ENCODE measurements at regions of chr5 and their contacts with region 1.

Region 1: DNA sequence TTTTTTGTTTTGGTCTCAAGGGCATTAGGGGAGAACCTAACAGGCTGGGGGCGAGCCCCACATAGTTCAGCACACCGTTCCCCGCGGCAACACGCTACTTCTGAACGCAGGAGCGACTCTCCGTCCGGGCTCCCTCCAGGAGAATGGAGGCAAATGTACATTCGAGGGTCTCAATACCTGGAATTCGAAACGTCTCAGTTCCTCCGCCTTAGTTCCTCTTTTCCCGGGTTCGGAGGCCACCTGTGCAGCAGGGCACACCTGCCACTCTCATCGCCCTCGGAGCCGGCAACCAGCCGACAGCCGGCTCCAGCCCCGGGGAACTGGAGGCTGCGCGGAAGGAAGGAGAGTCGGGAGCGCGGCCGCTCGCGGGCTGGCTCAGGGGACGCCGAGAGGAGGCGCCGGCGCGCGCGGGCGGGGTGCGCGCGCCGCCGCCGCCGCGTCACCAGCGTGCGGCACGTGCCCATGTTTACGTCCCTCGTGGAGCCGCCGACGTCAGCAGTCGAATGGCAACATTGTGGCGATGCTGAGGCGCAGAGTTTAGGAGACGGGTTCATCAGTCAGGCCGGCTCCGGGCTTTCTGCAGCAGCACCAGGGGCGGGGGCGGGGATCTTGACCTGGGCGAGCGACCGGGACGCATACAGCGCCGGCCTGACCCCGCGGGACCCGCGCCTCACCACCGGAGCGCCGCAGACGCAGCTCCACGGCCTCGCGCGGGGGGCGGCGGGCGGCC is at the start of gene JMY:
- DNase-seq: peak; percentile 73 to 89 (median 84)
- ATAC-seq: peak; percentile 89
- H3K4me3 ChIP-seq: peak within 1 kb of the TSS; percentile 95
- H3K4me3 Mint-ChIP-seq: peak within 1 kb of the TSS; percentile 86 to 97 (median 94)
- H3K27ac ChIP-seq: peak within 1 kb of the TSS; percentile 99
- H3K27ac Mint-ChIP-seq: peak within 1 kb of the TSS; percentile 83 to 98 (median 93)
- H3K4me1 ChIP-seq: peaks cover 6 to 35% of the 10 kb centered on the region in 2 donors
- H3K4me1 Mint-ChIP-seq: peaks cover 15 to 35% (median 29%) of the 10 kb centered on the region in 7 donors
- H3K27me3 ChIP-seq: no peaks in the 10 kb centered on the region
- H3K27me3 Mint-ChIP-seq: peaks cover 0 to 4% (median 0%) of the 10 kb centered on the region in 5 donors
- total RNA-seq, gene JMY: 6.5 to 47.0 (median 24.2) TPM

Region 2: DNA sequence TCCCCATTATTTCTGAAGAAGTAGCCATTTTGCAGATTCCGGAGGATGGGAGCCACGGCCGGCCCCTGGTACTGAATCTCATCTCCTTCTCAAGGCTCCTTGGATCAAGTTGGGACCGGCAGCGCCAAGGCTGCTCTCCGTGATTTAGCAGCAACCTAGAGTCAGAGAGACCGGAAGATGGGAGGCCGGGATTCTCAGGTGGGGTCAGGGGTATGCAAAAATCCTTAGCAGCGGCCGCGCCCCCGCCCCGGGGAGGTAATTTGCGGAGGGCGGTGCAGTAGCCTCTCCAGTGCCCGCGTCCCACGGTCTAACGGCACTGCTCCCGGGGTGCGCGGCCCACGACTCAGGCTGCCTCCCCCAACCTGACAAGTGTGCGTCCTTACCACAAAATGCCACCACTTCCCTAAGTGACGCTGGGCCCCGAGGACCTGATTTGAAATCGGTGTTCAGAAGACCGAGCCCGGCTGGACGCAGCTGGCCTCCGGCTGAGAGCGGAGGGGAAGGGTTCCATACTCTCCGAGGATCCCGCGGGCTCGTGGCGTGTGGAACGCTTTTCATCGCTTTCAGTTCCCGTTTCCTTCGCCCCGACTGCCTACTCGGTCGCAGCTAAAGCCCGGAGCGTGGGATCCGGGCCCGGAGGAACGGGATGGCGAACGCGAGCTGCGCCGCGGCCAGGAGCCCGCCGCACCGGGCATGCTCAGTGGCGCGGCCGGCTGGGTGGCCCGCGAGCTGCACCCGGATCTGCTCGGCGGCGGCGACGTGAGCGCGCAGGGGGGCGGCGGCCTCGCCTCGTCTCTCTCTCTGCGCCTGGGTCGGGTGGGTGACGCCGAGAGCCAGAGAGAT is 875.7 kb before region 1 on chr5 and contains the start of gene SCAMP1:
- CTCF ChIA-PET with region 1: no interaction called
- POLR2A ChIA-PET with region 1: interaction called, 4 read pairs
- intact Hi-C with region 1: loop called in 1 of 2 experiments (anchors 2 kb)
- DNase-seq: peak; percentile 84 to 96 (median 93)
- ATAC-seq: peak; percentile 92
- H3K4me3 ChIP-seq: peak within 1 kb of the TSS; percentile 99
- H3K4me3 Mint-ChIP-seq: peak within 1 kb of the TSS; percentile 89 to 97 (median 94)
- H3K27ac ChIP-seq: peak within 1 kb of the TSS; percentile 85
- H3K27ac Mint-ChIP-seq: peak within 1 kb of the TSS; percentile 71 to 97 (median 96)
- H3K4me1 ChIP-seq: peaks cover 11 to 16% of the 10 kb centered on the region in 2 donors
- H3K4me1 Mint-ChIP-seq: peaks cover 27 to 64% (median 55%) of the 10 kb centered on the region in 7 donors
- H3K27me3 ChIP-seq: no peaks in the 10 kb centered on the region
- H3K27me3 Mint-ChIP-seq: no peaks in the 10 kb centered on the region
- total RNA-seq, gene SCAMP1: 16.9 to 27.6 (median 23.0) TPM

Region 3: GRCh38 chr5:79255786-79256557 is 20.2 kb after region 1 on chr5:
- CTCF ChIA-PET with region 1: interaction called, 5 read pairs
- POLR2A ChIA-PET with region 1: interaction called, 3 read pairs
- intact Hi-C with region 1: loop called in 1 of 2 experiments (anchors 2 kb)
- DNase-seq: no peak
- ATAC-seq: peak; percentile 10
- H3K4me3 ChIP-seq: no peak overlapping the region
- H3K4me3 Mint-ChIP-seq: no peak overlapping the region
- H3K27ac ChIP-seq: no peak overlapping the region
- H3K27ac Mint-ChIP-seq: peak overlapping the region in 1 of 9 donors; percentile 46
- H3K4me1 ChIP-seq: peaks cover 3 to 6% of the 10 kb centered on the region in 2 donors
- H3K4me1 Mint-ChIP-seq: peaks cover 7 to 88% (median 58%) of the 10 kb centered on the region in 7 donors
- H3K27me3 ChIP-seq: no peaks in the 10 kb centered on the region
- H3K27me3 Mint-ChIP-seq: no peaks in the 10 kb centered on the region

Region 4: DNA sequence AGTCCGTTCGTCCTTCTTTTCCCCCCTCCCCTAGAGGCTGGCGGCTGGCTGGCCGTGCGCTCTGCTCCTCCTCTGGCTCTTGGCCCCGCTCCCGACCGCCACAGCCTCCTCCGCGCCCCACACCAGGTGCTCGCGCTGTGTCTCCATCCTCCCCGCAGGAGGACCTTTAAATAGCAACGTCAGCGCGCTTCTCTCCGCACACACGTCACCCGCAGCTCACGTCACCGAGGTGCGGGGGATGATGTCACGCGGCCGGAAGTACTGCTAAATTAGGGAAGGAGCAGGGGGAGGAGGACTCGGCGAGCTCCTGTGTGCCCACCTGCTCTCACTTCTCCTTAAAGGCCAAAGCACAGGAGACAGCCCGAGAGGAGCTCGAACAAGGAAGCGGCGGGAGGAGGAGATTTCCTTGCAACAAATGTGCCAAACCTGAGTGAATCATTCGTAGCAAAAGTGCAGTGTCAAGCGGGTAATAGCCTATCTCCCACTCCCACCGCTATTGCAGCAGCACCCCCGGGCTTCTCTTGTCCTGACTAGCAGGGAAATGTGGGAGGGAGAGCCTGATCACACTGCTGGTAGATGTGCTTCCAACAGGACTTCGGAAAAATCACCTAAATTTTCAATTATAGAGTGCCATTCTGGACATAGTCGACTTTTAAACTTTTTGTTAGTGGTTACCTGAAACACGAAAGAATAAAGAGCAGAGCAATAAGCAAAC is 278.7 kb after region 1 on chr5:
- CTCF ChIA-PET with region 1: no interaction called
- POLR2A ChIA-PET with region 1: interaction called, 5 read pairs
- intact Hi-C with region 1: loop called (anchors 1 kb)
- DNase-seq: peak; percentile 80 to 94 (median 91)
- ATAC-seq: peak; percentile 91
- H3K4me3 ChIP-seq: peak overlapping the region; percentile 71
- H3K4me3 Mint-ChIP-seq: peak overlapping the region; percentile 88 to 99 (median 98)
- H3K27ac ChIP-seq: peak overlapping the region; percentile 97
- H3K27ac Mint-ChIP-seq: peak overlapping the region; percentile 93 to 99 (median 98)
- H3K4me1 ChIP-seq: peaks cover 4 to 26% of the 10 kb centered on the region in 2 donors
- H3K4me1 Mint-ChIP-seq: peaks cover 6 to 53% (median 40%) of the 10 kb centered on the region in 7 donors
- H3K27me3 ChIP-seq: peaks cover 0 to 7% of the 10 kb centered on the region in 2 donors
- H3K27me3 Mint-ChIP-seq: peaks cover 0 to 27% (median 23%) of the 10 kb centered on the region in 5 donors

Region 5: DNA sequence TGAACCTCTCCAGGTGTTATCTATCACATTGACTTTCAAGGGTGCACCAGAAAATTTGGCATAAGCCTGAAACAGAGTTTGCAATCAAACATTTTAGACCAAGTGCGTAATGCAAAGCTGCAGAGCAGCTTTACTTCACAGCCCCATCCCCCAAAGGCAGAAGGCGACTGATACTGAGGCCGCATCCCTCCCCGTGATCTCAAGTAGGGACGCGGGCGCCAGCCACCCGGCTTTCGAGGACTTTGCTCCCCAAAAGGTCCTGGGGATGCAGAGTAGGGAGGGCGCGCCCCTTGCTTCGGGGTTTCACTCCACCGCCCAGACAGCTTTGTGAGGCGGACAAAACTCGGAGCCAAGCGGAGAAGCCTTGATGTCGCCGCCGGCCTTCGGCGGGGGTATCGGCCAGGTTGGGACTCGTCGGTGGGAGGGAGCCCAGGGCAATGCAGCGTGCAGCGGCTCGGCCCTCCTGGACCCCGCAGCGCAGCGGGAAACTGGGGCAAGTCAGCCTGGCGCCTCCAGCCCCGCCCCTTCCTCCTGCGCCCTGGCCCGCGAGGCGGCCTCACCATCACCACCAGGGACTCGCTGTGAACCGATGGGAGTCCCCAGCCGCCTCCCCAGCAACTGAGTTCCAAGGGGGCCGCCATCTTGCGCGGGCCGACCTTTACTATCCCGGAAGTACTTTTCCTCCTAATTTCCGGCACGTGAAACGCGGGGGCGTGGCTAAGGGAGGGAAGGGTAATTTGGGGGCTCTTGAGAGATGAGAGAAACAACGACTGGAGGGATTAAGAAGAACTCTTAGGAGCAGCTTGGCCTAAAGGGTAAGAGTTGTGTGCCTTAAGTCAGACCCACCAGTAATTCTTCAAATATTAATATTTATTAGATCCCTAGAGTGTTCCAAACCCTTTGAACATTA is 755.1 kb after region 1 on chr5 and contains the start of gene MTX3:
- CTCF ChIA-PET with region 1: no interaction called
- POLR2A ChIA-PET with region 1: no interaction called
- intact Hi-C with region 1: loop called (anchors 2 kb)
- DNase-seq: peak; percentile 65 to 85 (median 82)
- ATAC-seq: peak; percentile 97
- H3K4me3 ChIP-seq: peak within 1 kb of the TSS; percentile 80
- H3K4me3 Mint-ChIP-seq: peak within 1 kb of the TSS; percentile 76 to 93 (median 88)
- H3K27ac ChIP-seq: peak within 1 kb of the TSS; percentile 75
- H3K27ac Mint-ChIP-seq: peak within 1 kb of the TSS; percentile 82 to 95 (median 92)
- H3K4me1 ChIP-seq: peaks cover 17 to 18% of the 10 kb centered on the region in 2 donors
- H3K4me1 Mint-ChIP-seq: peaks cover 17 to 47% (median 36%) of the 10 kb centered on the region in 7 donors
- H3K27me3 ChIP-seq: no peaks in the 10 kb centered on the region
- H3K27me3 Mint-ChIP-seq: peaks cover 0 to 13% (median 8%) of the 10 kb centered on the region in 5 donors
- total RNA-seq, gene MTX3: 12.9 to 31.0 (median 24.4) TPM

Region 6: GRCh38 chr5:80407735-80408482 is 1172.1 kb after region 1 on chr5 and contains the start of gene ZFYVE16:
- CTCF ChIA-PET with region 1: no interaction called
- POLR2A ChIA-PET with region 1: no interaction called
- intact Hi-C with region 1: loop called in 1 of 2 experiments (anchors 2 kb)
- DNase-seq: peak; percentile 93 to 98 (median 94)
- ATAC-seq: peak; percentile 93
- H3K4me3 ChIP-seq: peak within 1 kb of the TSS; percentile 94
- H3K4me3 Mint-ChIP-seq: peak within 1 kb of the TSS; percentile 91 to 99 (median 96)
- H3K27ac ChIP-seq: peak within 1 kb of the TSS; percentile 85
- H3K27ac Mint-ChIP-seq: peak within 1 kb of the TSS; percentile 97 to 100 (median 99)
- H3K4me1 ChIP-seq: peaks cover 0 to 3% of the 10 kb centered on the region in 2 donors
- H3K4me1 Mint-ChIP-seq: peaks cover 20 to 32% (median 21%) of the 10 kb centered on the region in 7 donors
- H3K27me3 ChIP-seq: no peaks in the 10 kb centered on the region
- H3K27me3 Mint-ChIP-seq: peaks cover 0 to 7% (median 0%) of the 10 kb centered on the region in 5 donors
- total RNA-seq, gene ZFYVE16: 12.0 to 32.0 (median 26.0) TPM

Measured in naive thymus-derived CD4-positive, alpha-beta T cell (primary cell).